Activated CD8-positive, alpha-beta T cell treated with anti-CD3 and anti-CD28 coated beads for 36 hours (primary cell): ENCODE measurements at regions of chr16 and their contacts with region 1.

Region 1: DNA sequence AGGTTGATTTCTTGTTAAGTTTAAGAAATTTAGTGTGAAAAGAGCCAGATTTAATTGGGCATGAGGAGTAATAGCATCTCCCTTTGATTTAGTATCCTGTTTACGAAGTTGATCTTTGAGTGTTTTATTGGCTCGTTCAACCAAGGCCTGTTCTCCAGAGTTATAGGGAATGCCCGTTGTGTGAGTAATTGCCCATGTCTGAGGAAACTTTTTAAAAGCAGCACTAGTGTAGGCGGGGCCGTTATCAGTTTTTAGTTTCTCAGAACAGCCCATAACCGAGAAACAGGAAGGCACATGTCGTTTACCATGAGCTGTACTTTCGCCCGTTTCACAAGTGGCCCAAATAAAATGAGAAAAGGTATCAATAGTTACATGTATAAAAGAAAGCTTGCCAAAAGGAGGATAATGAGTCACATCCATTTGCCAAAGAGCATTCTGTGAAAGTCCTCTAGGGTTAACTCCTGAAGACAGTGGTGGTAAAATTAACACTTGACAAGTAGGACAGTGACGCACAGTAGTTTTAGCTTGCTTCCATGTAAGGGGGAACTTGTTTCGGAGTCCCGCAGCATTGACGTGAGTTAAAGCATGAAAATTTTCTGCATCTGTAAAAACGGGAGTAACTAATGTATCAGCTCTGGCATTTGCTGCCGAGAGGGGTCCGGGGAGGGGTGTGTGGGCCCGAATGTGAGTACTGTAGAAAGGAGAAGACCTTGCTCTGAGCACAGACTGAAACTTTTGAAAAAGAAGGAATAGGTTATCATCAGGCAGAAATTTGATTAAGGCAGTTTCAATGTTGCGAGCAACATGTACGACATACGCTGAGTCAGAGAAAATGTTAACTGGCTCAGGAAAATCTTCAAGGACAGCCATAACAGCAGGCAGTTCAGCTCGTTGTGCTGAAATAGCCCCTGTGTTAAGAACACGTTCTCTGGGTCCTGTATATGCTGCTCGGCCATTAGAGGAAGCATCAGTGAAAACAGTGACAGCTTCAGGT is 18.5 kb upstream of the KCTD5 start:
- DNase-seq: peak; percentile 85
- ATAC-seq: peak; percentile 93
- H3K4me3 Mint-ChIP-seq: peak overlapping the region; percentile 48
- H3K27ac Mint-ChIP-seq: peak overlapping the region; percentile 95
- H3K4me1 Mint-ChIP-seq: peaks cover 49% of the 10 kb centered on the region
- H3K27me3 Mint-ChIP-seq: no peaks in the 10 kb centered on the region
- CTCF ChIP-seq: no peak

Region 2: DNA sequence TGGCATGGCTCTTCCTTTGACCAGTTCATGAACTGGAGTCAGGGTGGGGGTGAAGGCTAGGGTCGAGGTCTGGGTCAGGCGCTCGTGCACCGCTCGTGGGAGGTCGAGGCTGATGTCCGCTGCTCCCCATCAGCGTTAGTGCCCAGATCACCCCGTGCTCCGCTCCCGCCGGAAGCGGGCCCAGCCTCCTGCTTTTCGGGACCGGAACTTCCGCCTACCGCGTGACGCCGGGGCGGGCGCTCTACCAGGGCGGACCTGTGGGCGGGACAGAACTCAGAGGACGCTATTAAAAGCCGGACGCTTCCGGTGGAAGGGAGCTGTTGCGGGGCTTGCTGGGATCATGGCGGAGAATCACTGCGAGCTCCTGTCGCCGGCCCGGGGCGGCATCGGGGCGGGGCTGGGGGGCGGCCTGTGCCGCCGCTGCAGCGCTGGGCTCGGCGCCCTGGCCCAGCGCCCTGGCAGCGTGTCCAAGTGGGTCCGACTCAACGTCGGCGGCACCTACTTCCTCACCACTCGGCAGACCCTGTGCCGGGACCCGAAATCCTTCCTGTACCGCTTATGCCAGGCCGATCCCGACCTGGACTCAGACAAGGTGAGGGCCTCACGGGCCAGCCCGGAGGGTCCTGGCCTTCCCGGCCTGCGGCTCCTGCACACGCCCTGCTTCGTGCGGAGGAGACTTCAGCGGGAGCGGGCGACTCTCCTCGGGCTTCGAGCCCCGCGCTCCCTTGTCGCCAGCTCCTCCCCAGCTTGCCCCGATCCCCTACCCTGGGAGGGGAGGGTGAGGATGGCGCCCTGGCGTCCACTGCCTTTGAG is 18.6 kb after region 1 on chr16 and contains the start of gene KCTD5:
- CTCF ChIA-PET with region 1: no interaction called
- POLR2A ChIA-PET with region 1: interaction called, 12 read pairs
- intact Hi-C with region 1: no loop called
- DNase-seq: peak; percentile 99
- ATAC-seq: peak; percentile 95
- H3K4me3 Mint-ChIP-seq: peak within 1 kb of the TSS; percentile 96
- H3K27ac Mint-ChIP-seq: peak within 1 kb of the TSS; percentile 94
- H3K4me1 Mint-ChIP-seq: peaks cover 34% of the 10 kb centered on the region
- H3K27me3 Mint-ChIP-seq: no peaks in the 10 kb centered on the region
- CTCF ChIP-seq: no peak
- total RNA-seq, gene KCTD5: 26.0 to 27.3 TPM